Activated CD4-positive, alpha-beta T cell treated with anti-CD3 and anti-CD28 coated beads for 36 hours (primary cell): ENCODE measurements at regions of chr4 and their contacts with region 1.

Region 1: GRCh38 chr4:2652828-2653227 is 103.3 kb downstream of the TNIP2 start:
- DNase-seq: no peak
- ATAC-seq: peak; percentile 26
- H3K4me3 Mint-ChIP-seq: no peak overlapping the region
- H3K27ac Mint-ChIP-seq: peak overlapping the region; percentile 62
- H3K4me1 Mint-ChIP-seq: peaks cover 25% of the 10 kb centered on the region
- H3K27me3 Mint-ChIP-seq: no peaks in the 10 kb centered on the region

Region 2: DNA sequence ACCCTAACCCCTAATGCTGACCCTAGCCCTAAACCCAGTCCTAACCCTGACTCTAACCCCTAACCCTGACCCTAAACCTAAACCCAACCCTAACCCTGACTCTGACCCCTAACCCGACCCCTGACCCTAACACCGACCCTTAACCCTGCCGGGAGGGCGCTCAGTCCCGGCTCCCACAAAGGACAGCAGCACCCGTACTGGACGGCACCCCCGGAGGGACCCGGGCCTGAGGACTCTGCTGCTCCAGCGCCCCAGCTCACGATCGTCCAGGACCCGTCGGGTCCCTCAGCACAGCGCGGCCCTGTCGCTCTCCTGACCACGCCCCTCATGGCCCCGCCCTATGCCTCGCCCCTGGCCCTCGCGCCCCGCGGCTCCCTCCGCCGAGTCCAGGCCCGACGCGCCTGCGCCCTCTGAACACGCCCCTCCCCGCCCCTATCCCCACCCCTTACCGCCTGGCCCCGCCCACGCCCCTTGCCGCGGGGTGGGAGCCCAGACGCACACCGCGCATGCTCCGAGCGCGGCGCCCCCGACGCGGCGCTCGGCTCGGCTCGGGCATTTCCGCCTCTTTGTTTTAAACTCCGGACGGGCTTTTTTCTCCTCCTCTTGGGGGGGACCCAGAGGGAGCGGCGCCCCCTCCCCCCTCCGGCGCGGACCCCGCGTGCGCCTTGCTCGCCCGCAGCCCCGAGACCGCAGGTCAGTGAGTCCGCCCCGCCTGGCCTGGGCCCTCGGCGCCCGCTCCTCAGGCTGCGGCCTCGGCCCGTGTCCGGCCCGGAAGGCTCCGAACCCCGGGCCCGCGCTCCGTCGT is 1947.3 kb before region 1 on chr4 and contains the start of gene PCGF3:
- CTCF ChIA-PET with region 1: no interaction called
- POLR2A ChIA-PET with region 1: no interaction called
- intact Hi-C with region 1: no loop called
- DNase-seq: peak; percentile 99
- ATAC-seq: peak; percentile 99
- H3K4me3 Mint-ChIP-seq: peak within 1 kb of the TSS; percentile 68
- H3K27ac Mint-ChIP-seq: no peak within 1 kb of the TSS
- H3K4me1 Mint-ChIP-seq: peaks cover 15% of the 10 kb centered on the region
- H3K27me3 Mint-ChIP-seq: no peaks in the 10 kb centered on the region
- total RNA-seq, gene PCGF3: 20.6 to 22.5 TPM

Region 3: DNA sequence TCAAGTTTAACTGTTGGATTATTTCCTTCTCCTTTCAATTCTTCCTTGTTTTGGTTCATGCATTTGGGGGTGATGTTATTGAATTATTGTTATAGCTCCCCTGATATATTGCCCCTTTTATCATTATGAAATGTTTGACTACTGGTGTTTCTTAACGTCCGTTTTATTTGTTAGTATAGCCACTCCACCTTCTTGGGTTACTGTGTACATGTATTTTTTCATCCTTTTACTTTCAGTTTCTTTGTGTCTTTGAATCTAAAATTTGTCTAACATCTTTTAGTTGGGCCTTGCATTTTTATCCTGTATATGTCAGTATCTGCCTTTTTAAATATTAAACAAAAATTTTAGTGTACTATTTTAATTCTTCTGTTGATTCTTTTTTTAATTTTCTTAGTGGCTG is 14.6 kb after region 1 on chr4:
- CTCF ChIA-PET with region 1: interaction called, 3 read pairs
- POLR2A ChIA-PET with region 1: no interaction called
- intact Hi-C with region 1: loop called in 1 of 2 experiments (anchors 2 kb)
- DNase-seq: no peak
- ATAC-seq: no peak
- H3K4me3 Mint-ChIP-seq: peak overlapping the region; percentile 28
- H3K27ac Mint-ChIP-seq: peak overlapping the region; percentile 63
- H3K4me1 Mint-ChIP-seq: peaks cover 32% of the 10 kb centered on the region
- H3K27me3 Mint-ChIP-seq: no peaks in the 10 kb centered on the region